Endothelial cell of umbilical vein (primary cell): ENCODE measurements at regions of chr1 and their contacts with region 1.

Region 1: DNA sequence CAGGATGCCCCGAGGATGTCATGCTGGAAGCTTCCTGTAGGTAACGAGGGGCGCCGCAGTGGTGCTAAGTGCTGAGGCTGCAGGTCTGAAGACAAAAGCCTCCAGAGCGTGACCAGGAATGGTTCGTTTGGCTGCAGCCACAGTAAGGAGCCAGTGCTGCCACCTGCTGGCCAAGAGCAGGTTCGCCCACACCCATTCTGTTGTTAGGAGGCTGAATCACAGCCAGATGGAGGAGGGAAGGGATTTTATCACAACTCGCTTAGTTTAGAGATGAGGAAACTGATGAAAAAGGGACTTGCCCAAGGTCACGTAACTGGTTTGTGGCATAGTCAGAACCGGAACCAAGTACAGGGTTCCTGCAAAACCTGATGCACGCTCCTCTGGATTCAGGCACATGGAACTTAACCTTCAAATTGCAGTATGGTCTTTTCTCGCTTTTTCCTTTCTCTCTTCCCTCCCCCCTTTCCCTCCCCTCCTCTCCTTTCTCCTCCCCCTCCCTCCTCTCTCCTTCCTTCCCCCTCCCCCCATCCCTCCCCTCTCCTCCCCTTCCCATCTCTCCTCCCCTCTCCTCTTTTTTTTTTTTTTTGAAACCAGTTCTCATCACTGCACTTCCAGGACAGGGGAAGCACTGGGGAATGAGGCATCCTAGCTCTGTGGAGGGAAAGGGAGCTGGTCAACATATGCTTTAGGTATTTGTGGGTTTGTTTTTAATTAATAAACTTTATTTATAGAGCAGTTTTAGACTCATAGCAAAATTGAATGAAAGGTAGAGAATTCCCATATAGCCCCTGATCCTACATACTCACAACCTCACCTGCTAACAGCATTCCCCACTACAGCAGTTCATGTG is 81.8 kb downstream of the MPZL1 start:
- DNase-seq: peak; percentile 92
- H3K4me3 ChIP-seq: no peak overlapping the region
- H3K27ac ChIP-seq: no peak overlapping the region
- H3K4me1 ChIP-seq: peaks cover 5% of the 10 kb centered on the region
- H3K27me3 ChIP-seq: no peaks in the 10 kb centered on the region
- CTCF ChIP-seq: peak; percentile 96 to 99
- POLR2A ChIP-seq: no peak

Region 2: GRCh38 chr1:167553136-167554027 is 250.2 kb before region 1 on chr1 and contains the start of gene CREG1:
- CTCF ChIA-PET with region 1: no interaction called
- POLR2A ChIA-PET with region 1: no interaction called
- dilution Hi-C with region 1: no loop called
- intact Hi-C with region 1: loop called (anchors 5 kb)
- DNase-seq: peak; percentile 91
- H3K4me3 ChIP-seq: peak within 1 kb of the TSS; percentile 42 to 60 (median 49)
- H3K27ac ChIP-seq: no peak within 1 kb of the TSS
- H3K4me1 ChIP-seq: peaks cover 5% of the 10 kb centered on the region
- H3K27me3 ChIP-seq: peaks cover 0 to 2% of the 10 kb centered on the region in 2 experiments
- CTCF ChIP-seq: no peak
- POLR2A ChIP-seq: peak; percentile 49
- total RNA-seq, gene CREG1: 12.1 and 15.8 TPM in 2 replicates

Region 3: GRCh38 chr1:167599957-167600581 is 203.5 kb before region 1 on chr1:
- CTCF ChIA-PET with region 1: no interaction called
- POLR2A ChIA-PET with region 1: no interaction called
- dilution Hi-C with region 1: no loop called
- intact Hi-C with region 1: loop called (anchors 1 kb)
- DNase-seq: peak; percentile 40
- H3K4me3 ChIP-seq: no peak overlapping the region
- H3K27ac ChIP-seq: no peak overlapping the region
- H3K4me1 ChIP-seq: no peaks in the 10 kb centered on the region
- H3K27me3 ChIP-seq: no peaks in the 10 kb centered on the region
- CTCF ChIP-seq: peak in 1 of 2 donors; percentile 29
- POLR2A ChIP-seq: no peak

Region 4: DNA sequence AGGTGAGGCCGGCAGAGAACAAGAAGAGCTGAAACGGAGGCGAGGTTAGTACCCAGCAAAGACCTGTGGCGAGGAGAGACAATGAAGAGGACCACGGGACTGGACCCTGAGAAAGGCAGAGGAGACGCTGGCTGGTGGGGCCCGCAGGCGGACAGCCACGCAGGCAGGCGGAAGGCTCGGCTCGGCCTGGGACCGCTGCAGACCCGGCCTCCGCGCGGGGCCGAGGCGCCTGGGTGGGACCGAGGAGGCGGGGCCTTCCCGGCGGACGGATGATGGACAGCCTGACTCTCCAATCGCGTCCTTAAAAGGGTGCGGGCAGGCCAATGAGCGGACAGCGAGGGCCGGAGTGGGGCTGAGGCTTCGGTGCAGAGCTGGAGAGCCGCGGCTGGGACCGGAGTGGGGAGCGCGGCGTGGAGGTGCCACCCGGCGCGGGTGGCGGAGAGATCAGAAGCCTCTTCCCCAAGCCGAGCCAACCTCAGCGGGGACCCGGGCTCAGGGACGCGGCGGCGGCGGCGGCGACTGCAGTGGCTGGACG is 81.9 kb before region 1 on chr1 and contains the start of gene MPZL1:
- CTCF ChIA-PET with region 1: interaction called, 5 read pairs
- POLR2A ChIA-PET with region 1: no interaction called
- dilution Hi-C with region 1: no loop called
- intact Hi-C with region 1: loop called (anchors 1 kb)
- DNase-seq: peak; percentile 96
- H3K4me3 ChIP-seq: peak within 1 kb of the TSS; percentile 59 to 97 (median 72)
- H3K27ac ChIP-seq: peak within 1 kb of the TSS; percentile 72
- H3K4me1 ChIP-seq: peaks cover 26% of the 10 kb centered on the region
- H3K27me3 ChIP-seq: no peaks in the 10 kb centered on the region
- CTCF ChIP-seq: no peak
- POLR2A ChIP-seq: peak; percentile 61
- total RNA-seq, gene MPZL1: 99.1 and 99.4 TPM in 2 replicates

Region 5: DNA sequence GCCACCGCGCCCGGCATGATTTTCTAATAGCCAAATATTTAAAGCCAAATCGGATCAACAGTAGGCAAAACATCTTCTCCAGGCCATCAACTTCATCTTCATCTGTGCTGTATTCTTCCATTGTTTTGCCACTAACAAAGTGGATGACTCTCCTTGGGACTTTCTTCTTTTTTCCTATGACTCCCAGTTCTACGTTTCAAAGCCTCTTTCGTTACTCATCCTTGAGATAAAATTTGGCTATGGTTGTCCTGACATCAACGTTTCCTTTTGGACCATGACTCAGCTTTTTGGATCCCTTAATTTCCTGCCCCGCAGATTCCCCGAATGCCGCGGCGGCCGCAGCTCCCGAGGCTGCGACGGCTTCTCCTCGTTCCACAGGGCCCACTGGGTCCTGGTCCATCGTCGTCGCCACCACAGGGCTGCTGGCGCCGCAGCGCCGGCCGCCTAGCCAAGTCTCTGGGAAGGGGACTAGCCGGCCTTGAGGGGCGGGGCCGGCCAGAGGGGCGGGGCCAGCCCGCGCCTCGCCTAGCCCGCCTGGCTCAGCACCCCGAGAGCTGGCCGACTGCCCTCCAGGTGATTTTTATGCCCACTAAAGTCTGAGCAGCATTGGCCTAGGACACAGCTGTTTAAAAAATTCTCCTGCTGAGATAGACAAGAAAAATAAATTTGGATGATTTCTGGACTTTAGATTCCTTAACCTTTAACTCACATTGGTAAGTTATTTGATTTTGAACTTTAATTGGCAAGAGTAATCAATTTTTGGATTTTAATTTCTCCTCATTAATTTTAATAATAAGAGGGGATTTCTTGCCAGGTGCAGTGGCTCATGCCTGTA is 16.5 kb after region 1 on chr1:
- CTCF ChIA-PET with region 1: interaction called, 4 read pairs
- POLR2A ChIA-PET with region 1: no interaction called
- dilution Hi-C with region 1: no loop called
- intact Hi-C with region 1: loop called (anchors 1 kb)
- DNase-seq: peak; percentile 82
- H3K4me3 ChIP-seq: peak overlapping the region in 1 of 3 experiments; percentile 16
- H3K27ac ChIP-seq: peak overlapping the region; percentile 69
- H3K4me1 ChIP-seq: peaks cover 7% of the 10 kb centered on the region
- H3K27me3 ChIP-seq: no peaks in the 10 kb centered on the region
- CTCF ChIP-seq: no peak
- POLR2A ChIP-seq: no peak

Region 6: DNA sequence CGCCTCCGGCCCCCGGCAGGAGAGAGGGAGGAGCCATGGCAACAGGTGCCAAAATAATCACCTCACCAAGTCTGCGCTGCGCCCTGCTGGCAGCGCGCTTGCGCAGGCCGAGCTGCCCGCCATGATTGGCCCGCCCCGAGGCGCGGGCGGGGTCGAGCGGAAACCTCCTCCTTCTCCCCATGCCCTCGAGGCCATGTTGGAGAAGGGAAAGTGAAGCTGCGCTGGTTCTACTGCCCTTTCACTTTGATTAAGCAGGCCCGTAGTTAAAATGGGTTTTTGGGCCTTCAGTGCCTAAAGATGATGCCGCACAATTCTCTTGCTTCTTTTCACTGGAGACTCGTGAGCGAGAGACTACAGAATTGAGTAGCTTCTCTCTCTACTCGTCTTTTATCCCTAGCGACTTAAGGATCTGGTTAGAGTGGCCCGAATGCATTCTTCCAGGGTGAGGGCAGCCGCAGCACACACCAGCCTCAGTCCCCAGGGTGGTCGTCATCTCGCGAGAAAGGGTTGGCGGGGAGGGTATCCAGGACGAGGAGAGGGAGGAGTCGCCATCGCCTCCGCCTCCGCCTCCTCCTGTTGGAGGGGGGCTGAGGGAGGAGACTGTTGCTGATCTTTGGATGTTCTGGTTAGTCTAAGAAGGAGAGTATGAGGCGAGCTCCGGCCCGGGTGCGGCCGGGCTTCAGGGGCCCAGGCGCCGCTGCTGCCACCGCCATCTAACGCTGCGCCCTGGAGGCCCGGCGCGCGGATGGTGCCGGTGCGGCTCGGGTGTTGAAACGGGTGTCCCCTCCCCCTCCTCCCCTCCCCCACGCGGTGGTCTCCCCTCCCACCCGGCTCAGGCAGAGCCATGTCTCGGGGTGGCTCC is 132.7 kb after region 1 on chr1 and contains the start of gene DCAF6:
- CTCF ChIA-PET with region 1: no interaction called
- POLR2A ChIA-PET with region 1: no interaction called
- dilution Hi-C with region 1: no loop called
- intact Hi-C with region 1: loop called (anchors 5 kb)
- DNase-seq: peak; percentile 99
- H3K4me3 ChIP-seq: peak within 1 kb of the TSS; percentile 87 to 95 (median 93)
- H3K27ac ChIP-seq: peak within 1 kb of the TSS; percentile 93
- H3K4me1 ChIP-seq: peaks cover 18% of the 10 kb centered on the region
- H3K27me3 ChIP-seq: no peaks in the 10 kb centered on the region
- CTCF ChIP-seq: no peak
- POLR2A ChIP-seq: peak; percentile 89
- total RNA-seq, gene DCAF6: 38.7 and 39.4 TPM in 2 replicates